ENCODE measurements at regions of chr7 and their contacts with region 1.

Region 1: GRCh38 chr7:22860784-22861482 is 38.3 kb upstream of the TOMM7 start:
- DNase-seq: peak; percentile 48
- H3K4me3 Mint-ChIP-seq: no peak overlapping the region
- H3K27ac Mint-ChIP-seq: no peak overlapping the region
- H3K4me1 Mint-ChIP-seq: peaks cover 28% of the 10 kb centered on the region
- H3K27me3 Mint-ChIP-seq: no peaks in the 10 kb centered on the region
- CTCF ChIP-seq: peak; percentile 46

Region 2: GRCh38 chr7:22874904-22875303 is 14.0 kb after region 1 on chr7:
- CTCF ChIA-PET with region 1: no interaction called
- POLR2A ChIA-PET with region 1: interaction called, 11 read pairs
- intact Hi-C with region 1: no loop called
- DNase-seq: no peak
- H3K4me3 Mint-ChIP-seq: no peak overlapping the region
- H3K27ac Mint-ChIP-seq: no peak overlapping the region
- H3K4me1 Mint-ChIP-seq: no peaks in the 10 kb centered on the region
- H3K27me3 Mint-ChIP-seq: no peaks in the 10 kb centered on the region
- CTCF ChIP-seq: no peak

Region 3: DNA sequence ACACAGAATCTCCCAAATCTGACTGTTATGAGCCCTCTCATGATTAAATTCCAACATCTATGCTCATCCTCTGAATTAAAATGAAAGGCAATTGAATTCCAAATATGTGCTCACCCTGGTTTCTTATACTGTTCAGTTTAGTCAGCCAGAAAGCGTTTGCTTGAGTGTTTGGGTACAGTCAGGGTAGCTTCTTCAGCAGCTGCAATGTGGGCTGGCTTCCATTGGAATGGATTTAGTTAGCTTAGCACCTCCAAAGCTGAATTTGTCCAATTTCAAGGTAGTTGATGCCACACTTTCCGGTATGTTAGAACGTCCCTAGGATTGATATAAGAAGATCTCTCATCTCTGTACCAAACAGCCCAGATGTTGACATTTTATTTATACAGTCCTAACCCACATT is 254.0 kb after region 1 on chr7:
- CTCF ChIA-PET with region 1: no interaction called
- POLR2A ChIA-PET with region 1: no interaction called
- intact Hi-C with region 1: no loop called
- DNase-seq: no peak
- H3K4me3 Mint-ChIP-seq: no peak overlapping the region
- H3K27ac Mint-ChIP-seq: no peak overlapping the region
- H3K4me1 Mint-ChIP-seq: peaks cover 8% of the 10 kb centered on the region
- H3K27me3 Mint-ChIP-seq: no peaks in the 10 kb centered on the region
- CTCF ChIP-seq: no peak